Right cardiac atrium (tissue), 5 donors: ENCODE measurements at regions of chr22 and their contacts with region 1.

Region 1: DNA sequence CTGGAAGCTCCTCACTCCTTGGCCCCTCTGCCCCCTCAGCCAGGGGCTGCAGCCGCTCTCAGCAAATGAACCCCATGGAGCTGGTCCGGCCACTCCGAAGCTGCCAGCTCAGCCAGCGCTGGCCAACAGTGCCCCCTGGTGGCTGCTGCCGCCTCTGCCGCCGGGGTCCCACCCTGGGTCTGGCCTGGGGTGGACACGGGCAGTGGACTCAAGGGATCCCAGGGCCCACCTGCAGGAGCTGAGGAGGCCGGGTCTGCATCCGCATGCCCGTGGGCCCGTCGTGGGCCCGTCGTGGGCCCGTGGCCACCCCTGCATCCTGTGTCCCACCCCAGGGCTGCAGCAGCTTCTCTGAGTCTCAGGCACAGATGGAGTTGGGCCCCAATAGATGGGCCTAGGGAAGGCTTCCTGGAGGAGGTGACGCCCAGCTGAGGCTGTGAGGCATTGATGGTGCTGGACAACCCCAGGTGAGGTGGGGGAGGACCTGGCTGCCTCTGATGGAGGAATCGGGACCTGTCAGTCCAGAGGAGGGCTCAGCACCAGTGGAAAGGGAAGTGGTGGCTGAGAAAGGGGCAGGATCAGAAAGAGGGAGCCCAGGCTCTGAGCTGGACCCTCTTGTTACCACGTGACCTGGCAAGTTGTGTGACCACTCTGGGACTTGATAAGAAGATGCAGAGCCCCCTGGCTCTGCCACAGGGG is 522.3 kb downstream of the BRD1 start:
- DNase-seq: peak; percentile 58 to 86 (median 84)
- ATAC-seq: peak; percentile 66 to 87
- H3K4me3 ChIP-seq: no peak overlapping the region
- H3K27ac ChIP-seq: no peak overlapping the region
- H3K4me1 ChIP-seq: no peaks in the 10 kb centered on the region
- H3K27me3 ChIP-seq: no peaks in the 10 kb centered on the region

Region 2: GRCh38 chr22:48574776-48575565 is 730.4 kb before region 1 on chr22:
- intact Hi-C with region 1: loop called in 3 of 4 experiments (anchors 5 to 10 kb)
- DNase-seq: peak; percentile 30 to 67 (median 58)
- ATAC-seq: peak in 1 of 2 donors; percentile 71
- H3K4me3 ChIP-seq: peak overlapping the region; percentile 49
- H3K27ac ChIP-seq: no peak overlapping the region
- H3K4me1 ChIP-seq: no peaks in the 10 kb centered on the region
- H3K27me3 ChIP-seq: no peaks in the 10 kb centered on the region

Region 3: DNA sequence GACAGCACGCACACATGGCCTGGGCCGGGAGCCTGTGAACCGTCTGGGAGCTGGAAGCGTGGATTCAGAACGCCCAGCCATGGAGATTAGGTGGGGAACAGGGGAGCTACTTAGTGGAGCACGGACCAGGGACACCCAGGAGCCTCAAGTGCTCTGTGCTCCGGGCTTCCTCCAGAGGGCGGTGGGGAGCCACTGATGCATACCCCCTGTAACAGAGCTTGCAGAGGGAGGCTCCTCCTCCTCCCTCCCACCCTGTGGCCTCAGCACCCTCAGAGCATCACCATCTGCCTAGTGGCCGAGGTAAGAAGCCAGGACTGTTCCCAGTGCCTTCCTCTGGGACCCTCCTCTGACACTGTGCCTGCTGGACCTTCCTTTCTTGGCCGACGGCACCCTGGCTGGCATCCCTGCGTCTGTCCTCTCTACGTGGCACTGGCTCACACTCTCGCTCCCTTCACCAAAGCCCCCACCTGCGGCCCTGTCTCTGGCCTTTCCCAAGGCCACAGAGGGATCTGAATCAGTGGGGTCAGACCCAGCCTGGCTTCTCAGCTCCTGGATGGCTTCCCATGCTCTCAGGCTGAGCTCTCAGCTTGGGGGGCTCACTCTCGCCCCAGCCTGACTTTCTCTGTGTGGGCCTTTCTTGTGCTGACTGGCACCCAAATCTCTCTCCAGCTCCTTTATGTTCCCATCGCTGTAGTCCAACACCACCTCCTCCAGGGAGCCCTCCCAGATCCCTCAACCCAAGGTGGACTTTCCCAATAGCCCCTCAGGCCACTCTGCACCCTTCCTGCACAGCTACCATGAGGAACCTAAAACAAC is 258.6 kb before region 1 on chr22:
- intact Hi-C with region 1: loop called in 3 of 4 experiments (anchors 5 kb)
- DNase-seq: peak in 2 of 3 donors; percentile 61 to 79
- ATAC-seq: peak; percentile 63 to 90
- H3K4me3 ChIP-seq: no peak overlapping the region
- H3K27ac ChIP-seq: no peak overlapping the region
- H3K4me1 ChIP-seq: no peaks in the 10 kb centered on the region
- H3K27me3 ChIP-seq: no peaks in the 10 kb centered on the region

Region 4: GRCh38 chr22:49244466-49245420 is 60.6 kb before region 1 on chr22:
- intact Hi-C with region 1: loop called in 1 of 4 experiments (anchors 10 kb)
- DNase-seq: no peak
- ATAC-seq: peak in 1 of 2 donors; percentile 26
- H3K4me3 ChIP-seq: no peak overlapping the region
- H3K27ac ChIP-seq: no peak overlapping the region
- H3K4me1 ChIP-seq: no peaks in the 10 kb centered on the region
- H3K27me3 ChIP-seq: no peaks in the 10 kb centered on the region

Region 5: GRCh38 chr22:49415151-49415951 is 110.0 kb after region 1 on chr22:
- intact Hi-C with region 1: no loop called
- DNase-seq: no peak
- ATAC-seq: no peak
- H3K4me3 ChIP-seq: no peak overlapping the region
- H3K27ac ChIP-seq: no peak overlapping the region
- H3K4me1 ChIP-seq: no peaks in the 10 kb centered on the region
- H3K27me3 ChIP-seq: no peaks in the 10 kb centered on the region